Heart left ventricle (tissue), 16 donors: ENCODE measurements at regions of chr16 and their contacts with region 1.

Region 1: DNA sequence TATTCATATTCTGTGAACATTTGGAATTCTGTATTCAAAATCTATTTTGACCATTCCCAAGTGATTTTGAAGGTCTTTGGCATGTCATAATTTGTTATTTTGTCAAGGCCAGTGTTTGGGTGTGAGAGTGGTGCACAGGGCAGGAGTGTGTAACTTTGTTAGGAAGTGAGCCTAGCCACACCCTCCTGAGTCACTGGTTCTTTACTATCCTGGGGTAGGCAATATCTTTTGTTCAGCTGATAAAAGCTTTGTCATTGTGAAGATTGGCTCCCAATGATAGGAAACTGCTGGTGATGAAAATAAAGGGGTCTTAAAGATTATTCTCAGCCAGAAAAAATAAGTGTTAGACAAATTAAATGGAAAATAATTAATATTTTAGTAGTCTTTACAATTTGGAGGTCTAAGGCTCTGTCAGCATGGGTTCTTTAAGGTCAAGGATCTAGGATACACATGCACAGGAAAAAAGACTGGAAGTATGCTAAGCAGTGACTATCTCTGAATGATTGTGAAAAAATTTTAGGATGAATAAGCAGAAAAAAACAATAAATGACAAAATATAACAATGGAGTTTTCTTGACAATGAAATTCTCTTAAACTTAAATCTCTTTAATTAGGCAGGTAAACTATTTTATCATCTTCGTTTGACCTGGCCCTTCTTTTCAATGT is 5.1 kb downstream of the UBN1 start:
- DNase-seq: peak in 1 of 5 donors; percentile 40
- ATAC-seq: peak in 2 of 4 donors; percentile 38 to 44
- H3K4me3 ChIP-seq: no peak overlapping the region
- H3K27ac ChIP-seq: peak overlapping the region in 8 of 12 donors; percentile 2 to 45 (median 26)
- H3K4me1 ChIP-seq: peaks cover 0 to 51% (median 36%) of the 10 kb centered on the region in 12 donors
- H3K27me3 ChIP-seq: no peaks in the 10 kb centered on the region
- CTCF ChIP-seq: no peak
- POLR2A ChIP-seq: no peak

Region 2: DNA sequence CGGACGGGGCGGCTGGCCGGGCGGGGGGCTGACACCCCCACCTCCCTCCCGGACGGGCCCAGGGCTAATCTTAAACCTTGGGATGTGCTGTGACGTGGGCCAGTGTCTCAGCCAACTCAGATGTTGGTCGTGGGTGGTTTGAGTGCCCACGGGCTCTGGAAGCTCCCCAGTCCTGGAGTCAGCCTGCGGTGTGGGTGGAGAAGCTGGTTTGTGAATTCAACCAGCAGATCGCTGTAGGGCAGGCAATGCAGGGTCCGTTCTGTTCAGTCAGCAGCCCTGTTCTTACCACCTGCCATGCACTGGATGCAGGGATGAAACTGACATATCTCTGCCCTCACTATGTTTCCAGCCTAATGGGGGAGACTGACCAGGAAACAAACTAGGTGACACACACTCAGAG is 77.3 kb before region 1 on chr16:
- intact Hi-C with region 1: no loop called
- DNase-seq: no peak
- ATAC-seq: no peak
- H3K4me3 ChIP-seq: no peak overlapping the region
- H3K27ac ChIP-seq: no peak overlapping the region
- H3K4me1 ChIP-seq: no peaks in the 10 kb centered on the region
- H3K27me3 ChIP-seq: no peaks in the 10 kb centered on the region
- CTCF ChIP-seq: no peak
- POLR2A ChIP-seq: no peak

Region 3: GRCh38 chr16:4802659-4803287 is 49.6 kb before region 1 on chr16:
- intact Hi-C with region 1: loop called in 5 of 10 experiments (anchors 5 kb)
- DNase-seq: peak; percentile 94 to 96 (median 95)
- ATAC-seq: peak; percentile 89 to 94 (median 92)
- H3K4me3 ChIP-seq: peak overlapping the region; percentile 68 to 96 (median 86)
- H3K27ac ChIP-seq: peak overlapping the region; percentile 47 to 96 (median 90)
- H3K4me1 ChIP-seq: peaks cover 0 to 50% (median 25%) of the 10 kb centered on the region in 12 donors
- H3K27me3 ChIP-seq: no peaks in the 10 kb centered on the region
- CTCF ChIP-seq: peak in 8 of 12 donors; percentile 5 to 53 (median 32)
- POLR2A ChIP-seq: peak in 1 of 2 donors; percentile 53

Region 4: DNA sequence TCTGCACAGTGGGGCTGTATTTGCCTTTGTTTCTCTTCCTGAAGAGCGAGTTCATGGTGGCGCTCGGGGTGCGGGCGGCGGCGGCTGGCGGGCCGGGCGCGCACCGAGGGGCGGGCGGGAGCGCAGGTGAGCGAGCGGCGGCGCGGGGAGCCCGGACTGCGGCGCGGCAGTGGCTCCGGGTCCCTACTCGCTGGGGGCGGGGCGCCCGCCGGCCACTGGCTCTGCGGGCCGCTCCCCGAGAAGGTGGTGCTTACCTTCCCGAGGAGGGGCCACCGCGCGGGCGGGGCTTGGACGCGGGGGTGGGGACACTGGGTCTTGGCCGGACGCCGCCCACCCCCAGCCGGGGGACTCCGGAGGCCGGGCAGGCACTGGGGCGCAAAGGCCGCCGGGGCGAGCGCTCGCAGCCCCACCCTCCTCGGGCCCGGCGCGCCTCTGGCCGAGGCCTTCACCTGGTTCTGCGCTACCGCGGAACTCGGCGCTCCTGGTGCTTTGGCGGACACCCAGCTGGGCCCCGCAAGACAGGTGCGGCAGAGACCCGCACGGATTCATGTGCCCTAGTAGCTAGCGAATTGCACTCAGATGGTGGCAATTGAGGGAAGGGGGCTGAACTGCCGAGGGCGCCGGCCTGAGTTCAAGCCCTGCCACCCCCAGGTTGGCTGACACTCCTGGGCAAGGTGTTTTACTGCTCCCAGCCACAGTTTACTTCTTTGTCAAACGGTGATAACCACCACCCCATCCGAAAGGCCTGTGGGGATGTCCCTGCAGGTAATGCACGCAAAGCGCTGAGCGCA is 84.8 kb after region 1 on chr16 and contains the start of gene PPL:
- intact Hi-C with region 1: loop called in 2 of 10 experiments (anchors 5 to 10 kb)
- DNase-seq: peak; percentile 61 to 82 (median 69)
- ATAC-seq: peak; percentile 23 to 66 (median 56)
- H3K4me3 ChIP-seq: peak within 1 kb of the TSS; percentile 38 to 63 (median 52)
- H3K27ac ChIP-seq: peak within 1 kb of the TSS in 4 of 12 donors; percentile 24 to 61 (median 48)
- H3K4me1 ChIP-seq: peaks cover 0 to 29% (median 13%) of the 10 kb centered on the region in 12 donors
- H3K27me3 ChIP-seq: peaks cover 0 to 40% (median 5%) of the 10 kb centered on the region in 9 donors
- CTCF ChIP-seq: no peak
- POLR2A ChIP-seq: no peak
- total RNA-seq, gene PPL: 6.4 to 23.8 (median 8.3) TPM

Region 5: GRCh38 chr16:4944333-4945281 is 92.3 kb after region 1 on chr16:
- intact Hi-C with region 1: loop called in 3 of 10 experiments (anchors 5 to 10 kb)
- DNase-seq: peak; percentile 80 to 94 (median 89)
- ATAC-seq: peak; percentile 81 to 92 (median 90)
- H3K4me3 ChIP-seq: no peak overlapping the region
- H3K27ac ChIP-seq: peak overlapping the region in 10 of 12 donors; percentile 34 to 76 (median 64)
- H3K4me1 ChIP-seq: peaks cover 0 to 39% (median 25%) of the 10 kb centered on the region in 12 donors
- H3K27me3 ChIP-seq: no peaks in the 10 kb centered on the region
- CTCF ChIP-seq: no peak
- POLR2A ChIP-seq: no peak

Region 6: GRCh38 chr16:5075637-5076036 is 223.3 kb after region 1 on chr16:
- intact Hi-C with region 1: loop called in 1 of 10 experiments (anchors 10 kb)
- DNase-seq: no peak
- ATAC-seq: no peak
- H3K4me3 ChIP-seq: no peak overlapping the region
- H3K27ac ChIP-seq: no peak overlapping the region
- H3K4me1 ChIP-seq: peaks cover 0 to 19% (median 6%) of the 10 kb centered on the region in 12 donors
- H3K27me3 ChIP-seq: no peaks in the 10 kb centered on the region
- CTCF ChIP-seq: no peak
- POLR2A ChIP-seq: no peak